Heart left ventricle (tissue), 16 donors: ENCODE measurements at regions of chr12 and their contacts with region 1.

Region 1: GRCh38 chr12:116662612-116663144 is 75.2 kb downstream of the SPRING1 start:
- DNase-seq: peak in 2 of 5 donors; percentile 35 to 67
- ATAC-seq: peak in 1 of 4 donors; percentile 6
- H3K4me3 ChIP-seq: no peak overlapping the region
- H3K27ac ChIP-seq: peak overlapping the region in 1 of 12 donors; percentile 37
- H3K4me1 ChIP-seq: peaks cover 0 to 37% (median 14%) of the 10 kb centered on the region in 12 donors
- H3K27me3 ChIP-seq: no peaks in the 10 kb centered on the region
- CTCF ChIP-seq: no peak
- POLR2A ChIP-seq: no peak

Region 2: GRCh38 chr12:116455540-116456329 is 206.9 kb before region 1 on chr12:
- intact Hi-C with region 1: loop called in 1 of 10 experiments (anchors 10 kb)
- DNase-seq: peak; percentile 57 to 82 (median 81)
- ATAC-seq: peak; percentile 85 to 96 (median 92)
- H3K4me3 ChIP-seq: peak overlapping the region in 5 of 12 donors; percentile 5 to 38 (median 26)
- H3K27ac ChIP-seq: peak overlapping the region; percentile 47 to 96 (median 74)
- H3K4me1 ChIP-seq: peaks cover 0 to 24% (median 20%) of the 10 kb centered on the region in 12 donors
- H3K27me3 ChIP-seq: no peaks in the 10 kb centered on the region
- CTCF ChIP-seq: no peak
- POLR2A ChIP-seq: no peak

Region 3: DNA sequence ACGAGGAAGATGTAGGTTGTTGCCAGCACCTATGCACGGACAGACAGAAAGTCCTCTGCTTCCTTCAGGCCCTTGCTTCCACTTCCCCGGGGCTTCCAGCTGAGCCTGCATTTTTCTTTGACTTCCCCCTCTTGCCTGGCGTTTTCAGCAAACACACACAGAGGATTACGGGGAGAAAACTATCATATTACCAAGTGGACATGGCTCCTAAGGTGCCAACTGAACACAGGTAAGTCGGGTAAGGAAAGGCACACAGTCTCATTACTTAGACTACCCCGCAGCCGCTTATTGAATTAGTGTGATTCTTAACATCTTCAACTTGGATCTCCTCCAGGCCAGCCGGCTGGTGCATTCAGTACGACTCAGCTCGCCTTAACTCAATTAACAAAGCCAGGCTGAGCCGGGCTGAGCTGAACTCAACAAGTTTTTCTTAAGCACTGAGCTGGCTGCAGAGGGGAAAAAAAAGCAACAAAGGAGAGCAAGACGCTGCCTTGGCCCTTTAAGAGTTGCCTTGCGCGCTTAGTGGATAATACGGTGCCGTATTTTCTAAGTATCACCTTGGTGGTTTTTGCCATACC is 122.7 kb before region 1 on chr12:
- intact Hi-C with region 1: no loop called
- DNase-seq: peak in 2 of 5 donors; percentile 52 to 67
- ATAC-seq: peak in 3 of 4 donors; percentile 23 to 40 (median 33)
- H3K4me3 ChIP-seq: peak overlapping the region in 3 of 12 donors; percentile 4 to 19 (median 17)
- H3K27ac ChIP-seq: peak overlapping the region in 5 of 12 donors; percentile 12 to 84 (median 34)
- H3K4me1 ChIP-seq: peaks cover 0 to 45% (median 15%) of the 10 kb centered on the region in 12 donors
- H3K27me3 ChIP-seq: no peaks in the 10 kb centered on the region
- CTCF ChIP-seq: no peak
- POLR2A ChIP-seq: no peak